ENCODE measurements at regions of chr11 and their contacts with region 1.

Region 1: GRCh38 chr11:61792310-61793085 is at the starts of genes FEN1 and TMEM258:
- DNase-seq: peak; percentile 60 to 93
- H3K4me3 ChIP-seq: peak within 1 kb of the TSS; percentile 79 to 99
- H3K27ac ChIP-seq: peak within 1 kb of the TSS; percentile 87 to 97
- H3K4me1 ChIP-seq: peaks cover 5 to 19% of the 10 kb centered on the region in 2 donors
- H3K27me3 ChIP-seq: no peaks in the 10 kb centered on the region
- CTCF ChIP-seq: peak in 2 of 3 experiments; percentile 20 to 22
- total RNA-seq, gene FEN1: 1.5 TPM
- total RNA-seq, gene TMEM258: 26.4 TPM

Region 2: GRCh38 chr11:61851113-61851899 is 58.8 kb after region 1 on chr11:
- intact Hi-C with region 1: loop called (anchors 5 kb)
- DNase-seq: no peak
- H3K4me3 ChIP-seq: peak overlapping the region in 1 of 2 donors; percentile 0
- H3K27ac ChIP-seq: peak overlapping the region; percentile 71 to 83
- H3K4me1 ChIP-seq: peaks cover 0 to 15% of the 10 kb centered on the region in 2 donors
- H3K27me3 ChIP-seq: no peaks in the 10 kb centered on the region
- CTCF ChIP-seq: no peak

Region 3: DNA sequence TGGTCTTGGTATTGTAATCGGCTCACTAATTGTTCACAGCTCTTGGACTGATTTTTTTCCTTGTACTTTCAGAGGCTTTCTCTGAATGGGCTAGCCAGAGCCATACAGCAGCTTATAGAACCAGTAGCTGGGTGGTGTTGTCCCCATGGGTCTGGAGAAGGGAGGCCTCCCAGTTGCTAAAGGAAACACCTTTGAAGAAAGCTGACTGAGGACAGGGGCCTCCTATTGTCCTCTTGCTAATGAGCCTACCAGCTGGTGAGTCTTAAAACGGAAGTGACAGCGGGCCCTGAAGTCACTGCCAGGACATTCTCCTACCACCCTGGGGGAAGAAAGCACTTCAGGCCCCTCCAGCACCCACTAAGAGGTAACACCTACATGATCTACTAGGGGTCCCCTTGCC is 88.9 kb after region 1 on chr11:
- intact Hi-C with region 1: no loop called
- DNase-seq: no peak
- H3K4me3 ChIP-seq: no peak overlapping the region
- H3K27ac ChIP-seq: peak overlapping the region; percentile 46 to 49
- H3K4me1 ChIP-seq: peaks cover 8 to 40% of the 10 kb centered on the region in 2 donors
- H3K27me3 ChIP-seq: no peaks in the 10 kb centered on the region
- CTCF ChIP-seq: no peak

Region 4: GRCh38 chr11:61891331-61892084 is 99.0 kb after region 1 on chr11 and contains the start of gene FADS3:
- intact Hi-C with region 1: loop called (anchors 2 kb)
- DNase-seq: peak; percentile 80 to 96
- H3K4me3 ChIP-seq: peak within 1 kb of the TSS; percentile 99
- H3K27ac ChIP-seq: peak within 1 kb of the TSS; percentile 90 to 98
- H3K4me1 ChIP-seq: peaks cover 22 to 30% of the 10 kb centered on the region in 2 donors
- H3K27me3 ChIP-seq: no peaks in the 10 kb centered on the region
- CTCF ChIP-seq: no peak
- total RNA-seq, gene FADS3: 191 TPM

Region 5: DNA sequence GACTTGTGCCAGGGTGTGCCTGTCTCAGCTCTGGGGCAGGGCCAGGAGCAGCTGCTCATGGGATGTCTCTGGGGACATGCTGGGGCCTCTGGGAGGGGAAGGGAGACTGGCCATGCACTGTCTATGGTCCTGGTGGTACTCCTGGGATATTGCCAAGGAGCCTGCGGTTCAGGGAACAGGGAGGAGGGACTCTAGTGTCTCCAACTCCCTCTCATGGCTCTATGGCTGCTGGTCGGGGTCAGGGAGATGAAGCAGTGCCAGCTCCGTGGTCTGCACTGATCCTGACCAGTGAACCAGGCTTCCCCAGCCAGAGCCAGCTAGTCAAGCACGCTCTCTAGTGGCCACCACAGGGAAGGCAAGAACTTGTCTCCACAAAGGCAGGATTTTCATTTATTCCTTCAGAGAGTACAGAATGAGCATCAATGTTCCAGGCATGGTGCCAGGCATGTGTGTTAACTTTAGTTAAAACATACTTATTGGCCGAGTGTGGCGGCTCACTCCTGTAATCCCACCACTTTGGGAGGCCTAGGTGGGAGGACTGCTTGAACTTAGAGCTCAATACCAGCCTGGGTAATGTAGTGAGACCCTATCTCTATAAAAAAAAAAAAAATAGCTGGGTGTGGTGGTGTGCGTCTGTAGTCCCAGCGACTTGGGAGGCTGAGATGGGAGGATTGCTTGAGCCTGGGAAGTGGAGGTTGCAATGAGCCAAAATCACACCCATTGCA is 155.2 kb after region 1 on chr11:
- intact Hi-C with region 1: loop called (anchors 2 kb)
- DNase-seq: peak; percentile 69 to 96
- H3K4me3 ChIP-seq: no peak overlapping the region
- H3K27ac ChIP-seq: peak overlapping the region in 1 of 2 donors; percentile 39
- H3K4me1 ChIP-seq: peaks cover 3 to 11% of the 10 kb centered on the region in 2 donors
- H3K27me3 ChIP-seq: no peaks in the 10 kb centered on the region
- CTCF ChIP-seq: peak; percentile 91 to 94 (median 94)

Region 6: DNA sequence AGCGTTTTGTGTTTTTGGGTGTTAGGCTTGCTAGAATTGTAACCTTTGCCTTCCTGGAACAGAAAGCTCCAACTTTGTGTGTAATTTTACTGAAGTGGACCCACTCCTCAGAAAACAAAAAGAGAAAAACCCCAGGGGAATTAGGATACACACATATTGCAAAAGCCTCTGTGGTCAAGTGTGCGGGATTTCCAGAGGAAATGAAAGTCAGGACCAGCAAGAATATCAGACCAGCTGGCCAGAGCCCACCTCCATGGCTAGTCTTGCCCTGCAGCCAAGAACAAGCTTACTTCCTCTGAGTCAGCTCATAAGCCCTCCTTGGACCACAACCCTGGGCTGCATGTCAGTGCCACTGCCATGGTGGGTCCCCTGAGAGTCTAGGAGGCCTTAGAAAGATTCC is 212.0 kb after region 1 on chr11:
- intact Hi-C with region 1: no loop called
- DNase-seq: peak; percentile 59 to 91
- H3K4me3 ChIP-seq: no peak overlapping the region
- H3K27ac ChIP-seq: peak overlapping the region; percentile 75 to 78
- H3K4me1 ChIP-seq: peaks cover 0 to 10% of the 10 kb centered on the region in 2 donors
- H3K27me3 ChIP-seq: no peaks in the 10 kb centered on the region
- CTCF ChIP-seq: no peak

Region 7: GRCh38 chr11:62081378-62082291 is 289.1 kb after region 1 on chr11:
- intact Hi-C with region 1: loop called (anchors 1 kb)
- DNase-seq: peak; percentile 21 to 89
- H3K4me3 ChIP-seq: peak overlapping the region in 1 of 2 donors; percentile 5
- H3K27ac ChIP-seq: no peak overlapping the region
- H3K4me1 ChIP-seq: no peaks in the 10 kb centered on the region
- H3K27me3 ChIP-seq: no peaks in the 10 kb centered on the region
- CTCF ChIP-seq: peak; percentile 90 to 94 (median 93)

Region 8: GRCh38 chr11:62123669-62124185 is 331.2 kb after region 1 on chr11 and contains the start of gene INCENP:
- intact Hi-C with region 1: loop called (anchors 5 kb)
- DNase-seq: peak; percentile 93 to 98
- H3K4me3 ChIP-seq: peak within 1 kb of the TSS; percentile 65 to 97
- H3K27ac ChIP-seq: peak within 1 kb of the TSS in 1 of 2 donors; percentile 70
- H3K4me1 ChIP-seq: peaks cover 4 to 13% of the 10 kb centered on the region in 2 donors
- H3K27me3 ChIP-seq: no peaks in the 10 kb centered on the region
- CTCF ChIP-seq: no peak
- total RNA-seq, gene INCENP: 55.5 TPM

Measured in ascending aorta (tissue), 2 donors.